Transverse colon (tissue), 4 donors: ENCODE measurements at regions of chr3 and their contacts with region 1.

Region 1: DNA sequence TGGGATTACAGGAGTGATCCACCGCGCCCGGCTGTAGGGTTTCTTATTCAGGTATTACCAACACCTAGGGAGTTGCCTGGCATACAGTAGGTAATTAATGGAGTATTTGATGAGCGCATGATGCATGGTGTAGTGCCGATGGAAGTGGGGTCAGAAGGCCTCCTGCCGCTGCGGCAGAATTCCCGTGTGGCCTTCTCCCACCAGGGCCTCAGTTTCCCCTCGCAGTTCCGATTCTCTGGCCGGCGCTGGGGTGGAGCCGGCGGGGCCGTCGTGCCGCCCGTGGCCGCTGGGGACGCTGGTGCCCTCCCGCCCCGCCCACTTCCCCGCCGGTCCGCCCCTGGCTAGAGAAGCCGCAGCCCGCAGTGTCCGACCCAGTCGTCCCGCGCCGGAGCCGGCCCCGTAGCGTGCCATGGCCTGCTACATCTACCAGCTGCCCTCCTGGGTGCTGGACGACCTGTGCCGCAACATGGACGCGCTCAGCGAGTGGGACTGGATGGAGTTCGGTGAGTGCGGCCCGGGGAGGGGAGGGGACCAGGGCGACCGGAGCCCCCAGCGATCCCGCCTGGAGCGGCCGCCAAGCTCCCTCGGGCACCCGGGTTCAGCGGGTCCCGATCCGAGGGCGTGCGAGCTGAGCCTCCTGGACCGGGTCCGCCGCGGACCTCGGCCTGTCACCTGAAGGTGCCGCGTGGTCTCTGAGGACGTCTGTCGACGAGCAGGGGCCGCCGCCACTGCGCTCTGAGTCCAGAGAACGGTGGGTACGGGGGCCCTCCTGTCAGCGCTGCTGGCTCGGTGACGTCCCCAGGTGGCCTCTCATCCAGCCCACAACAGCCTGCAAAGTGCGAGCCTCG is at the start of gene IRAK2:
- DNase-seq: peak; percentile 80
- H3K4me3 ChIP-seq: peak within 1 kb of the TSS; percentile 55 to 84 (median 81)
- H3K27ac ChIP-seq: peak within 1 kb of the TSS; percentile 68 to 76 (median 70)
- H3K4me1 ChIP-seq: peaks cover 0 to 9% (median 6%) of the 10 kb centered on the region in 4 donors
- H3K27me3 ChIP-seq: no peaks in the 10 kb centered on the region
- CTCF ChIP-seq: peak; percentile 67 to 99 (median 98)
- EP300 ChIP-seq: no peak
- POLR2A ChIP-seq: peak; percentile 29
- total RNA-seq, gene IRAK2: 0.20 to 4.9 (median 3.4) TPM

Region 2: DNA sequence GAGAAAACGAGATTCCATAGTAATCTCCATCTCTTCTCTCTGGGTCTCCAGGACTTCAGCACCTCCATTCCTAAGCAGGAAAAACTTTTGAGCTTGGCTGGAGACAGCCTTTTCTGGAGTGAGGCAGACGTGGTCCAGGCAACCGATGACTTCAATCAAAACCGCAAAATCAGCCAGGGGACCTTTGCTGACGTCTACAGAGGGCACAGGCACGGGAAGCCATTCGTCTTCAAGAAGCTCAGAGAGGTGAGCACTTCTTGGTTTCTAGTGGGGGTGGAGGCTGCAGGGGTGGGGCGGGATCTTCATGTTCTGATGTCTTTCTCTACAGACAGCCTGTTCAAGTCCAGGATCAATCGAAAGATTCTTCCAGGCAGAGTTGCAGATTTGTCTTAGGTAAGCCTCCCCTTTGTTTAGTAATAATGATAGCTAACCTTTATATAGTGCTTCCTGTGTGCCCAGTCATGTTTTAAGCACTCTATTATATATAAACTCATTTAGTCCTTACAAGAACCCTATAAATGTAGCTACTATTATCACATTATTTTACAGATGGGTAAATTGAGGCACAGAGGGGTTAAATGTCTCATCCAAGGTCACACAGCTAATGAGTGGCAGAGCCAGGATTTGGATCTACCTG is 48.5 kb after region 1 on chr3:
- in situ Hi-C with region 1: loop called in 1 of 4 experiments (anchors 10 kb)
- intact Hi-C with region 1: no loop called
- DNase-seq: no peak
- H3K4me3 ChIP-seq: no peak overlapping the region
- H3K27ac ChIP-seq: no peak overlapping the region
- H3K4me1 ChIP-seq: no peaks in the 10 kb centered on the region
- H3K27me3 ChIP-seq: no peaks in the 10 kb centered on the region
- CTCF ChIP-seq: no peak
- EP300 ChIP-seq: no peak
- POLR2A ChIP-seq: no peak

Region 3: GRCh38 chr3:10224784-10225665 is 60.3 kb after region 1 on chr3:
- in situ Hi-C with region 1: loop called in 2 of 4 experiments (anchors 10 kb)
- intact Hi-C with region 1: loop called (anchors 10 kb)
- DNase-seq: peak; percentile 85
- H3K4me3 ChIP-seq: no peak overlapping the region
- H3K27ac ChIP-seq: peak overlapping the region in 3 of 4 donors; percentile 15 to 28 (median 26)
- H3K4me1 ChIP-seq: peaks cover 6 to 28% (median 11%) of the 10 kb centered on the region in 4 donors
- H3K27me3 ChIP-seq: no peaks in the 10 kb centered on the region
- CTCF ChIP-seq: peak; percentile 79 to 91 (median 81)
- EP300 ChIP-seq: no peak
- POLR2A ChIP-seq: no peak